Activated B cell treated with CpG ODN at 0.5 μM for 24 hours (primary cell): ENCODE measurements at regions of chr3 and their contacts with region 1.

Region 1: GRCh38 chr3:113514265-113514769 is 639 bp downstream of the SPICE1 start:
- DNase-seq: no peak
- ATAC-seq: no peak
- H3K4me3 Mint-ChIP-seq: no peak overlapping the region
- H3K27ac Mint-ChIP-seq: no peak overlapping the region
- H3K4me1 Mint-ChIP-seq: peaks cover 7% of the 10 kb centered on the region
- H3K27me3 Mint-ChIP-seq: peaks cover 16% of the 10 kb centered on the region
- CTCF ChIP-seq: no peak

Region 2: DNA sequence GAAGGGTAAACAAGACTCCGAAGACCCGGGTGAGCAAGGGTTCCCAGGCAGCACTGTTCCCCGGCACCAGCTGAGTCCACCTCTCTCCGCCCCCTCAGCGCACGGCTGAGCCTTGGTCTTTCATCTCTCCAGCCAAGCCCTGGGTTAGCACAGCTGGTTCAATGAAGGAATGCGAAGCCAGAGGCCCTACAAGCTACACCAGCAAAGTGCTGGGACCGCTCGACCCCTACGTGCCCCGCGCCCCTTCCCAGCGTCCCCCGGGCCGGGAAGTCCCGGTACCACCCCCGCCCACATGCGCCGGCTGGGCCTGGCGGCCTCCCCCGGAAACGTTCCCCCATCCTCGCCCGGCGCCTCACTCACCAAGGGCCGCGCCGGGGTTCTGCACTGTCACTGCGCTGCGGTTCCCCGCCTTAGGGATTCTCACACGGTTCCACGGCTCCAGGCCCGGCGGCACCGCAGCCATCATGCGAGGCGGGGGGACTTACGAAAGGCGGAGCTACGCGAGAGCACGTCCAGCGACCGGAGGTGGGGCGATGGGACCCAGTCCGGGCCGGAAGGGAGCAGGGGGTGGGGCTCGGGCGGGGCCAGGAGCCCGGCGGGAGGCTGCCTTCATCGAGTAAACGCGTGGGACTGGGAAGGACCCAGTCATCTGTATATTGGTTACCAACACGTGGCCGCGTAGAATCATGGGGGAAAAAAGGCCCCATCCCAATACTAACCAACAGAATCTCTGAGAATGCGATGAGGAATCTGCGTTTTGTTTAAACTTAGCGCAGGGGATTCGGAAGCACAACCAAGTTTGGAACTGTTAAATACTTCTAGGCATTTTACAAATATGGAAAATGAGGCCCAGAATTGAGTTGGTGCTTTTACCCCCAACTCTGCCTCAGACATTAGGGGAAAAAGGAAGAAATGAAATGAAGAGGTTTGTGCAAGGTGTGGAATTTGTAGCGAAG is 494.9 kb before region 1 on chr3:
- CTCF ChIA-PET with region 1: no interaction called
- POLR2A ChIA-PET with region 1: interaction called, 3 read pairs
- intact Hi-C with region 1: loop called (anchors 1 kb)
- DNase-seq: peak; percentile 81
- ATAC-seq: peak; percentile 87
- H3K4me3 Mint-ChIP-seq: peak overlapping the region; percentile 92
- H3K27ac Mint-ChIP-seq: peak overlapping the region; percentile 95
- H3K4me1 Mint-ChIP-seq: peaks cover 54% of the 10 kb centered on the region
- H3K27me3 Mint-ChIP-seq: no peaks in the 10 kb centered on the region
- CTCF ChIP-seq: no peak

Region 3: GRCh38 chr3:113377158-113377557 is 137.2 kb before region 1 on chr3:
- CTCF ChIA-PET with region 1: no interaction called
- POLR2A ChIA-PET with region 1: no interaction called
- intact Hi-C with region 1: no loop called
- DNase-seq: no peak
- ATAC-seq: no peak
- H3K4me3 Mint-ChIP-seq: no peak overlapping the region
- H3K27ac Mint-ChIP-seq: no peak overlapping the region
- H3K4me1 Mint-ChIP-seq: no peaks in the 10 kb centered on the region
- H3K27me3 Mint-ChIP-seq: no peaks in the 10 kb centered on the region
- CTCF ChIP-seq: no peak

Region 4: GRCh38 chr3:113531826-113532697 is 17.7 kb after region 1 on chr3 and contains the start of gene SIDT1:
- CTCF ChIA-PET with region 1: interaction called, 5 read pairs
- POLR2A ChIA-PET with region 1: interaction called, 52 read pairs
- intact Hi-C with region 1: loop called (anchors 1 kb)
- DNase-seq: peak; percentile 49
- ATAC-seq: peak; percentile 80
- H3K4me3 Mint-ChIP-seq: peak within 1 kb of the TSS; percentile 98
- H3K27ac Mint-ChIP-seq: peak within 1 kb of the TSS; percentile 100
- H3K4me1 Mint-ChIP-seq: peaks cover 47% of the 10 kb centered on the region
- H3K27me3 Mint-ChIP-seq: peaks cover 2% of the 10 kb centered on the region
- CTCF ChIP-seq: no peak
- total RNA-seq, gene SIDT1: 35.7 and 44.9 TPM in 2 replicates

Region 5: DNA sequence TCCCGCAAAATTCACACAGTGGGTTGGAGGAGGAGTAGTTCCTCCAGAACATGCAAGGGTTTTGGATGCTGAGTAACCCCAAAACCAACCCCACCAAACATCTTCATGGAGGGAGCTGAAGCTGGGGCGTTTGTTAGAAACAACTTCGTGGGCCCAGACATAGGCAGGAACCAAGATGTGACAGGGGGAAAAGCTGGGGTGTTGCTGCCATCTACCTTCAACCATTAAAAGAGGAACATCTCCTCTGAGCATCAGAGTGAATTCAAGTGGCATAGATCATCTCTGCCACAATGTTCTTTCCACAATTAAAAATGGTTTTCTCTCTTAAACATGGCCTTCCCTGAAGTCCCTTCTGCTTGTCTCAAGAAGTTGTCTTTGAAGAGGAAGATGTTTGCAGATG is 38.5 kb after region 1 on chr3:
- CTCF ChIA-PET with region 1: interaction called, 3 read pairs
- POLR2A ChIA-PET with region 1: no interaction called
- intact Hi-C with region 1: loop called (anchors 2 kb)
- DNase-seq: no peak
- ATAC-seq: peak; percentile 84
- H3K4me3 Mint-ChIP-seq: no peak overlapping the region
- H3K27ac Mint-ChIP-seq: no peak overlapping the region
- H3K4me1 Mint-ChIP-seq: peaks cover 17% of the 10 kb centered on the region
- H3K27me3 Mint-ChIP-seq: no peaks in the 10 kb centered on the region
- CTCF ChIP-seq: no peak

Region 6: DNA sequence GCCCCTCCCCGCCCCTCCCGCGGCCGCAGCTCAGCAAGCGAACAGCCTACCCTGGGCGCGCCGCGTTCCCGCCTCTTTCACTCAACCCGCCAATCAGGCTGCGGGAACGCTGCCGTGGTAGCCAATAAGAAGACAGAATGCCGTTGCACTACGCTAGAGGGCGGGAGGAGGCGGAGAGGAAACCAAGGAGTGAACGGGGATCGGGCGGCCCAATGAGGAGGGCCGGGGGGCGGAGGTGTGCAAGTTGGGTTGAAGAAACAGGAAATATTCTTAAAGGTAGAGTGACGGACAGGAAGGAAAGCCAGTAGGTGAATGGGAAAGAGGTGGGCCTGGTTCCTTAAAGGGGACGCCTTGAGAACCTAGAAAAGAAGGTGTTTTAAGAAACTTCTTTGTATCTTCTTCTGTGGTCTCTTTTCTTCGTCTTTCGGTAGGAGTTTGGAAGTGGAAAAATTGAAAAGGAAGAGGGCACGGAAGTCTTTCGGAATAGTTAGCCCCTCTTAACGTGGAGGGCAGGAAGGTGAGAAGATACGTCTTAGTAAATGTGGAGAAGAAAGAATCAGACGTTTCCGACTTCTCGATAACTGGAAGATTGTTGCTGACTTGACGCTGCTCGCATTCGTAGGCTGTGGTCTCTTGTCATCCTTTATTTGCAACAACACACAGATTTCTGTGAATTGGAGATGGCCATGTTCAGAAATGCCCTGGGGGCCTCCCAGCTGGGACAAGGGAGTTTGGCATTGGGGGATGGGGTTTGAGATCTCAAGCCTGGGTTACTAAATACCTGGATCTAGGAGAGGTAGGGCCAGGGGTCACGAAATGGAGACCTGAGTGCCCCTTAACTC is 182.6 kb after region 1 on chr3:
- CTCF ChIA-PET with region 1: no interaction called
- POLR2A ChIA-PET with region 1: interaction called, 14 read pairs
- intact Hi-C with region 1: loop called (anchors 1 kb)
- DNase-seq: peak; percentile 95
- ATAC-seq: peak; percentile 89
- H3K4me3 Mint-ChIP-seq: no peak overlapping the region
- H3K27ac Mint-ChIP-seq: no peak overlapping the region
- H3K4me1 Mint-ChIP-seq: peaks cover 29% of the 10 kb centered on the region
- H3K27me3 Mint-ChIP-seq: no peaks in the 10 kb centered on the region
- CTCF ChIP-seq: no peak

Region 7: DNA sequence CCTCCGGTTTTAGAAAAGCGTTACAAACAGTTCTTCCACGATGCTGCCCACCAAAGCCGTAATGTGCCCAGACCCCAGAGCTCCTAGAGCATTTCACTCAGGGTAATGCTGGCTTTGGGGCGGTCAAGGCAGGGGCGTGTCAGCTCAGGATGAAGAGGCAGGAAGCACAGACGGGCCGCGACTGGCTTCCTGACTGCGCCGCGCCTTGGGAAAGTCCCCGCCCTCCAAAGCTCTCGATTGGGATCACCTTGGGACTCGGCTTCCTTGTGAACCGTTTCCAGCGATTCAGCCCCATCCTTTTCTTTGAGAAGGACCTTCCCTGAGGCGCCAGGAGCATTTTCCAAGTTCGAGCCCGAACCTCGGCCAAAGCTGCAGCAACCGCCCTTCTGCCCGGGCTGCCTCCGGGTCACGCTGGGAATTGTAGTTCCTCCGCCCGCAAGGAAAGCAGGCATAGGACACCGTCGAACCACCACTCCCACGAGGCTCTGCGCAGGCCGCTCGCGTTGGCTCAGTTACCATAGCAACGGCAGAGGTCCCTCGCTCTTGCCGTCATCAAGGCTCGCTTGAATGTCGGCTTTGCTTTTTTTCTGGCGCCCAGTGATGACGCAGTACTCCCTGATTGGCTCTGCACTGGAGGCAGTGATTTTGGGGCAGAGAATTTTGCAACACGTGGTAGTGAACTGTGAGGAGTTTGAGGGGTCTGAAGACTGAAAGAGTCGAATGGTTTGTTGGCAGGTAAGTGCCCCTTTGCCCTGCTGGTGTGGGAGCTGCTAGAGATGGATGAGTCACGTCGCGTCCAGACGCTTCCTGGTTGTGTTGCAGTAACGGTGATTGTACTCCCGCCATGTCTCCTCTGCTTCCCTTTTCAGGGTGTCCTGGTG is 542.1 kb after region 1 on chr3 and contains the starts of genes CCDC191 and QTRT2:
- CTCF ChIA-PET with region 1: no interaction called
- POLR2A ChIA-PET with region 1: no interaction called
- intact Hi-C with region 1: loop called (anchors 1 kb)
- DNase-seq: peak; percentile 89
- ATAC-seq: peak; percentile 95
- H3K4me3 Mint-ChIP-seq: peak within 1 kb of the TSS; percentile 99
- H3K27ac Mint-ChIP-seq: peak within 1 kb of the TSS; percentile 99
- H3K4me1 Mint-ChIP-seq: peaks cover 55% of the 10 kb centered on the region
- H3K27me3 Mint-ChIP-seq: peaks cover 3% of the 10 kb centered on the region
- CTCF ChIP-seq: no peak
- total RNA-seq, gene CCDC191: 14.7 and 17.2 TPM in 2 replicates
- total RNA-seq, gene QTRT2: 63.1 and 75.5 TPM in 2 replicates